GM12878 (cell line): ENCODE measurements at regions of chr7 and their contacts with region 1.

Region 1: GRCh38 chr7:7681179-7681935 is 37.0 kb downstream of the RPA3 start:
- DNase-seq: peak; percentile 56
- ATAC-seq: peak; percentile 97
- H3K4me3 ChIP-seq: no peak overlapping the region
- H3K27ac ChIP-seq: no peak overlapping the region
- H3K4me1 ChIP-seq: peaks cover 3% of the 10 kb centered on the region; the same call in 1 of the 2 replicates
- H3K27me3 ChIP-seq: no peaks in the 10 kb centered on the region
- CTCF ChIP-seq: peak; percentile 44 to 67 (median 52); a peak in 5 of 6 replicates
- EP300 ChIP-seq: no peak
- POLR2A ChIP-seq: no peak
- RAD21 ChIP-seq: peak; percentile 86

Region 2: DNA sequence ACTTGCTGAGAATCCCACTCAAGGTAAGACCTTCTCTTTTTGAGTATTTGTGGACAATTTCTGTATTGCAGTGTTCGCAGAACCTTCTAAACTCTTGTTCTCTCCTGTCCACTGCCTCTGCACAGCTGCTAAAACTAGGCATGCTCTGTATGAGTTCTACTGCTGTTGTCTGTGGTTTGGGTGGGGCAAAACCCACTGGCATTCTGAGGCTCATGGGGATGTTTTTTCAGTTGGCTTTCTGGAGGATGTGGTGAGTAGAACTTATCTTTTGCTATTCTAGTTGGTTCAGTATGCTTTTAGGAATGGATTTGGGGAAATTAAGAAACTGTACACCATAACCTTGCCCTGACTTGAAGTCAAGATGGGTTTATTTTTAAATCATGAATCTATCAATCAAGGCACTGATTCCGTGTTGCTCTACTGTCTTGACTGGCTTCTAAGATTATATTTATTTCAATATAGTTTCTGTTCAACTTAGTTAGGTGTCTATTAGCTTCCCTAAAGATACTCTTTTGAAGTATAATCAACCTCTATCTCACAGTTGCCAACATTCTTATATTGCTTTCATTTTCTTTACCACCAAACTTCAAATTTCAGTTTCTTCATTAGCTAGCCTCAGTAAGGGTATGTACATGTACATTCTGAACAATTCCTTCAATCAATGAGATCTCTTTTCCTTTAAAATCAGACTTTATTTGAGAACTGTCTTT is 524.0 kb before region 1 on chr7:
- CTCF ChIA-PET with region 1: no interaction called
- POLR2A ChIA-PET with region 1: no interaction called
- RAD21 ChIA-PET with region 1: no interaction called
- SMC1A ChIA-PET with region 1: no interaction called
- in situ Hi-C with region 1: no loop called
- intact Hi-C with region 1: no loop called
- DNase-seq: peak; percentile 45
- ATAC-seq: peak; percentile 58
- H3K4me3 ChIP-seq: no peak overlapping the region
- H3K27ac ChIP-seq: no peak overlapping the region
- H3K4me1 ChIP-seq: no peaks in the 10 kb centered on the region
- H3K27me3 ChIP-seq: no peaks in the 10 kb centered on the region
- CTCF ChIP-seq: no peak
- EP300 ChIP-seq: no peak
- POLR2A ChIP-seq: no peak; the same call in 1 of the 2 replicates
- RAD21 ChIP-seq: no peak

Region 3: GRCh38 chr7:7640221-7641128 is 40.9 kb before region 1 on chr7 and contains the start of gene UMAD1:
- CTCF ChIA-PET with region 1: interaction called, 14 read pairs
- POLR2A ChIA-PET with region 1: interaction called, 5 read pairs
- RAD21 ChIA-PET with region 1: interaction called, 9 read pairs
- SMC1A ChIA-PET with region 1: interaction called, 30 read pairs
- in situ Hi-C with region 1: no loop called
- intact Hi-C with region 1: no loop called
- DNase-seq: peak; percentile 99
- ATAC-seq: peak; percentile 95
- H3K4me3 ChIP-seq: peak within 1 kb of the TSS; percentile 93
- H3K27ac ChIP-seq: peak within 1 kb of the TSS; percentile 79
- H3K4me1 ChIP-seq: no peaks in the 10 kb centered on the region
- H3K27me3 ChIP-seq: no peaks in the 10 kb centered on the region
- CTCF ChIP-seq: no peak
- EP300 ChIP-seq: 0 out of 4 replicates have a peak, but pooled peaks of 1 of the 2 experiments have one; percentile 15
- POLR2A ChIP-seq: peak; percentile 95
- RAD21 ChIP-seq: no peak
- polyA plus RNA-seq, gene UMAD1: 8.7 to 8.8 TPM

Region 4: GRCh38 chr7:7719236-7719635 is 37.9 kb after region 1 on chr7:
- CTCF ChIA-PET with region 1: interaction called, 23 read pairs
- POLR2A ChIA-PET with region 1: no interaction called
- RAD21 ChIA-PET with region 1: interaction called, 49 read pairs
- SMC1A ChIA-PET with region 1: interaction called, 58 read pairs
- in situ Hi-C with region 1: no loop called
- intact Hi-C with region 1: no loop called
- DNase-seq: peak; percentile 77
- ATAC-seq: peak; percentile 96
- H3K4me3 ChIP-seq: no peak overlapping the region
- H3K27ac ChIP-seq: peak overlapping the region; percentile 29; the same call in 1 of the 2 replicates
- H3K4me1 ChIP-seq: peaks cover 20% of the 10 kb centered on the region; the same call in 1 of the 2 replicates
- H3K27me3 ChIP-seq: no peaks in the 10 kb centered on the region
- CTCF ChIP-seq: no peak
- EP300 ChIP-seq: peak; percentile 74 to 80; a peak in 3 of 4 replicates
- POLR2A ChIP-seq: peak; percentile 37; the same call in 1 of the 2 replicates
- RAD21 ChIP-seq: peak; percentile 18; the same call in 1 of the 2 replicates

Region 5: GRCh38 chr7:7761340-7761980 is 80.1 kb after region 1 on chr7:
- CTCF ChIA-PET with region 1: interaction called, 179 read pairs
- POLR2A ChIA-PET with region 1: interaction called, 3 read pairs
- RAD21 ChIA-PET with region 1: interaction called, 148 read pairs
- SMC1A ChIA-PET with region 1: interaction called, 218 read pairs
- in situ Hi-C with region 1: no loop called
- intact Hi-C with region 1: loop called (anchors 1 kb)
- DNase-seq: no peak
- ATAC-seq: peak; percentile 70
- H3K4me3 ChIP-seq: peak overlapping the region; percentile 56
- H3K27ac ChIP-seq: peak overlapping the region; percentile 55
- H3K4me1 ChIP-seq: peaks cover 6% of the 10 kb centered on the region
- H3K27me3 ChIP-seq: no peaks in the 10 kb centered on the region
- CTCF ChIP-seq: peak in 2 of 3 experiments; percentile 32 to 50; a peak in 4 of 6 replicates
- EP300 ChIP-seq: no peak
- POLR2A ChIP-seq: no peak
- RAD21 ChIP-seq: peak; percentile 61

Region 6: GRCh38 chr7:7968543-7969305 is 287.4 kb after region 1 on chr7 and contains the start of gene GLCCI1:
- CTCF ChIA-PET with region 1: interaction called, 27 read pairs
- POLR2A ChIA-PET with region 1: interaction called, 6 read pairs
- RAD21 ChIA-PET with region 1: interaction called, 23 read pairs
- SMC1A ChIA-PET with region 1: interaction called, 42 read pairs
- in situ Hi-C with region 1: no loop called
- intact Hi-C with region 1: loop called (anchors 2 kb)
- DNase-seq: peak; percentile 98
- ATAC-seq: peak; percentile 88
- H3K4me3 ChIP-seq: peak within 1 kb of the TSS; percentile 82
- H3K27ac ChIP-seq: peak within 1 kb of the TSS; percentile 95
- H3K4me1 ChIP-seq: peaks cover 31% of the 10 kb centered on the region
- H3K27me3 ChIP-seq: no peaks in the 10 kb centered on the region
- CTCF ChIP-seq: no peak
- EP300 ChIP-seq: peak; percentile 21 to 61; a peak in 1 of 4 replicates
- POLR2A ChIP-seq: peak; percentile 74
- RAD21 ChIP-seq: no peak
- polyA plus RNA-seq, gene GLCCI1: 16.2 to 17.9 TPM

Region 7: DNA sequence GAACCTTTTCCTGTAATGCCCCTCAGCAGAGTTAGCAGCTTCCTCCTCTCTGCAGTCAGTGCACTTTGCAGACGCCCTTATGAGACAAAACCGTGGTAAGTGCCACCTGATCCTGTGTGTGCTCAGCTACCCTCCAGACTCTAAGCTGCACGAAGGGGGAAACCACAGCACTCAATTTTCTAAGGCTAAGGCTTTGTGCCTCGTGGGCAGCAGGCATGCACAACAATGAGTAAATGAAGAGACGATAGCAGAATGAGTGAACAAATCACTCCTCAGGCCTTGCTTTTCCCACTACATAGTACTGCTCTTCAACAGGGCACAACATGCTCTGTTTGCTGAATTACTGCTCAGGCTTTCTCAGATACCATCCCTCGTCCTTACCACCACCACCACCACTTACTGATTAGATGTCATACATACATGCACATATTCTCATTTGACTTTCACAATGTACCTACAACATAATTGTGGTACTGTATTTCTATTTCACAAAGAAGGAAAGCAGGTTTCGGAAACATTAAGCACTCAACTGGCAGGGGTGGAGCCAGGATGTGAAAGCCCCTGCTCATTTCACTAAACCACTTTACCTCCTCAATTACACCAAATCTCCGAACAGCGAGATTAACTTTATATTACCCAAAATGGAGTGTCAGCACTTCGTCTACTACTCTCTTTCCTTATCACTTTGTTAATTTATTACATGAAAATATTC is 495.2 kb after region 1 on chr7:
- CTCF ChIA-PET with region 1: interaction called, 5 read pairs
- POLR2A ChIA-PET with region 1: no interaction called
- RAD21 ChIA-PET with region 1: interaction called, 7 read pairs
- SMC1A ChIA-PET with region 1: interaction called, 14 read pairs
- in situ Hi-C with region 1: no loop called
- intact Hi-C with region 1: no loop called
- DNase-seq: peak; percentile 96
- ATAC-seq: peak; percentile 82
- H3K4me3 ChIP-seq: peak overlapping the region; percentile 8
- H3K27ac ChIP-seq: peak overlapping the region; percentile 98
- H3K4me1 ChIP-seq: peaks cover 39% of the 10 kb centered on the region
- H3K27me3 ChIP-seq: no peaks in the 10 kb centered on the region
- CTCF ChIP-seq: no peak
- EP300 ChIP-seq: peak; percentile 22 to 52; a peak in 2 of 4 replicates
- POLR2A ChIP-seq: peak; percentile 62
- RAD21 ChIP-seq: 0 out of 2 replicates have a peak, but pooled peaks have one; percentile 3